ENCODE measurements at regions of chr13 and their contacts with region 1.

Region 1: DNA sequence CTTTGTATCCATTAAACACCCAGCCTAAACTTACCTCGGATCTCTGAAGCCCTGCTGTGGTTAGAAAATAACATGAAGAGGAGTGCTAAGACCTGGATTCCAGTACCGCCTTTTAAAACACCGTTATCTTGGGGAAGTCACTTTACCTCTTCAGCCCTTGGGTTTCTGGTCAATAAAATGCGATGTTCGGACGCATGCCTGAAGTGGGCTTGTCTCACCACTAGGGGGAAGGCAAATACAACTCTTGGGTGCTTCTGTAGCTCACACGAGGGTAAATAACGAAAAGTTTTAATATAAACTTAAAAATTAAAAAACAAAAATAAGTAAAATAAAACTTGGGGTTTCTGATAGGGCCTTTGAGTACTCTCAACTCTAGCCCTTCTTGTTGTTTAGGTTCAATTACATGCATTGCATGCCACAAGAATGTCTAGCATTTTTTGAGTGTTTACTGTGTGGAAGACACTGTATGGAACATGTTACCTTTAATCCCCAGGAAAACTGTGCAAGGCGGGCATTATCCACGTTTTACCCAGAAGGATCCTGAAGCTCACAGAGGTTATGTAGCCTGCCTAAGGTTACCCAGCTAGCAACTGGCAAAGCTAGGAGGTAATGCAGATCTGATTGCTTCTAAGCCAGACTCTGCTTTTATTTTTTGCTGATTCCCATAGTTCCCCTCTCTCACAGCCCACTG is 240.4 kb downstream of the LMO7 start:
- DNase-seq: peak; percentile 53
- H3K4me3 ChIP-seq: no peak overlapping the region
- H3K27ac ChIP-seq: no peak overlapping the region
- H3K4me1 ChIP-seq: no peaks in the 10 kb centered on the region
- H3K27me3 ChIP-seq: peaks cover 1% of the 10 kb centered on the region
- CTCF ChIP-seq: peak; percentile 96 to 97

Region 2: GRCh38 chr13:75566658-75567057 is 309.8 kb before region 1 on chr13:
- CTCF ChIA-PET with region 1: no interaction called
- dilution Hi-C with region 1: no loop called
- in situ Hi-C with region 1: no loop called
- intact Hi-C with region 1: loop called (anchors 2 kb)
- DNase-seq: peak; percentile 35
- H3K4me3 ChIP-seq: no peak overlapping the region
- H3K27ac ChIP-seq: no peak overlapping the region
- H3K4me1 ChIP-seq: peaks cover 17% of the 10 kb centered on the region
- H3K27me3 ChIP-seq: no peaks in the 10 kb centered on the region
- CTCF ChIP-seq: peak; percentile 25 to 44

Region 3: GRCh38 chr13:76016799-76017400 is 140.4 kb after region 1 on chr13:
- CTCF ChIA-PET with region 1: interaction called, 7 read pairs
- dilution Hi-C with region 1: no loop called
- in situ Hi-C with region 1: no loop called
- intact Hi-C with region 1: loop called (anchors 2 kb)
- DNase-seq: peak; percentile 40
- H3K4me3 ChIP-seq: no peak overlapping the region
- H3K27ac ChIP-seq: no peak overlapping the region
- H3K4me1 ChIP-seq: peaks cover 26% of the 10 kb centered on the region
- H3K27me3 ChIP-seq: no peaks in the 10 kb centered on the region
- CTCF ChIP-seq: peak; percentile 68

Region 4: GRCh38 chr13:76053181-76053580 is 176.7 kb after region 1 on chr13:
- CTCF ChIA-PET with region 1: interaction called, 24 read pairs
- dilution Hi-C with region 1: no loop called
- in situ Hi-C with region 1: no loop called
- intact Hi-C with region 1: loop called (anchors 2 kb)
- DNase-seq: peak; percentile 42
- H3K4me3 ChIP-seq: no peak overlapping the region
- H3K27ac ChIP-seq: no peak overlapping the region
- H3K4me1 ChIP-seq: peaks cover 4% of the 10 kb centered on the region
- H3K27me3 ChIP-seq: no peaks in the 10 kb centered on the region
- CTCF ChIP-seq: peak in 1 of 2 donors; percentile 18

Region 5: DNA sequence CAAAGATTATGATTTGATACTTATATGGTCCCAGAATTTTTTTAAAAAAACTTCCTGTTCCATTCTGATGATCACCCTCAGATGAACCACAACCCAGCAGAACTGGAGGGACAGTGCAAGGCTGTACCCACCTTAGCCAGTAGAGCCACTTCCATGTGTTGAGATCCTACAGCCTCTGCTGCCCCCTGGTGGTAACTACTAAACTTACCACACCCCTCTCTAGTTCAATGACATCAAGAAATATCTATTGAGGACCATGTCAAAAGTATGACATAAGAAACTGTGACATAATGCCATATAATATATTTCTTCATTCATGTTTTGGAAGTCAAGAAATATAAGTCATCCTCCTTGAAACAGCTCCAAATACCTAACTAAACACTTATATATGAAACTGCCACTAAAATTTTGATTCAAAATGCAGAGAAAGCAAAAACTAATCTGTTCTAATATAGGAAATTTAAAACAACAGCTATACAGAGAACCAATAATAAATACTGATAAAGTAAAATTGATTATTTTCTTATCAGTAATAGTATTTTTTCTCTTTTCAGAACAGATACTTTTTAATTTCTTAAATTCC is 597.1 kb after region 1 on chr13:
- CTCF ChIA-PET with region 1: no interaction called
- dilution Hi-C with region 1: no loop called
- in situ Hi-C with region 1: loop called (anchors 5 kb)
- intact Hi-C with region 1: loop called (anchors 1 kb)
- DNase-seq: peak; percentile 57
- H3K4me3 ChIP-seq: no peak overlapping the region
- H3K27ac ChIP-seq: no peak overlapping the region
- H3K4me1 ChIP-seq: no peaks in the 10 kb centered on the region
- H3K27me3 ChIP-seq: peaks cover 2% of the 10 kb centered on the region
- CTCF ChIP-seq: peak; percentile 71 to 81

Region 6: GRCh38 chr13:76822698-76823267 is 946.3 kb after region 1 on chr13:
- CTCF ChIA-PET with region 1: no interaction called
- dilution Hi-C with region 1: no loop called
- in situ Hi-C with region 1: no loop called
- intact Hi-C with region 1: loop called (anchors 1 kb)
- DNase-seq: peak; percentile 46
- H3K4me3 ChIP-seq: no peak overlapping the region
- H3K27ac ChIP-seq: no peak overlapping the region
- H3K4me1 ChIP-seq: no peaks in the 10 kb centered on the region
- H3K27me3 ChIP-seq: peaks cover under 1% of the 10 kb centered on the region
- CTCF ChIP-seq: peak; percentile 27 to 63

Region 7: DNA sequence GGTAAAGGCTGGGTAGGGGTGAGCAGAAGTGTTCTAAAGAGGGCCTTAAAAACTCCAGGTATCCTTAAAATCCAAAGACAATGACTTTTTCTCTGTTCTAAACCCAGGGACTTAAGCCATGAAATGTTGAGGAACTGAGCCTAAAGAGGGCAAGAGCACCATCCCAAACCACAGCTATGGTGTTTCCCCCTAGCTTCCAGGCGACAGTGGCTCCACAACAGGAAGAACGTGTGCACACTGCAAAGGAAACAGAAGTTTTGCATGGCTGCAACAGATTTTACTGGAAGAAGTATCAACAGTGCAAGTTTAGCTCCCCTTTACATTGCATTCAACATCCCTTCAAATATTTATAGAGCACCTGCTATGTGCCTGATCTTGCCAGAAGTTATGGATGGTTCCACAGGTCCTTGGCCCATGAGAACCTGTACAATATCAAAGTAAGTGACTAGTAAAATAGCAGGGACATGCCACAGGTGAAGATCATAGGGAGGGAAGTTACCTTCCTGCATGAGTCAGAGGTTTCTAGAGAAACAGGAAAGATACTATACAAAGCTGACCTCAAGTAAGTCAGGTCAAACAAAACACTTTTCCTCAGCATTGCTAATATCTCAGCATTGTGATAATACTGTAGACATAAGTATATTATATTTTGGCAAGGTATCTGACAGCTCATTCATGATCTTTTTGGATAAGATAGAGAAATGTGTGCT is 1018.1 kb after region 1 on chr13:
- CTCF ChIA-PET with region 1: no interaction called
- dilution Hi-C with region 1: no loop called
- in situ Hi-C with region 1: loop called in 1 of 2 experiments (anchors 10 kb)
- intact Hi-C with region 1: no loop called
- DNase-seq: peak; percentile 75
- H3K4me3 ChIP-seq: no peak overlapping the region
- H3K27ac ChIP-seq: no peak overlapping the region
- H3K4me1 ChIP-seq: peaks cover 35% of the 10 kb centered on the region
- H3K27me3 ChIP-seq: no peaks in the 10 kb centered on the region
- CTCF ChIP-seq: no peak